AG04449 (cell line): ENCODE measurements at regions of chr1 and their contacts with region 1.

Region 1: GRCh38 chr1:205141236-205142101 is 19.7 kb upstream of the RBBP5 start:
- DNase-seq: peak; percentile 45
- H3K4me3 ChIP-seq: no peak overlapping the region
- CTCF ChIP-seq: peak; percentile 64

Region 2: GRCh38 chr1:204885288-204885711 is 256.2 kb before region 1 on chr1:
- CTCF ChIA-PET with region 1: no interaction called
- POLR2A ChIA-PET with region 1: no interaction called
- DNase-seq: peak; percentile 17
- H3K4me3 ChIP-seq: no peak overlapping the region
- CTCF ChIP-seq: no peak

Region 3: DNA sequence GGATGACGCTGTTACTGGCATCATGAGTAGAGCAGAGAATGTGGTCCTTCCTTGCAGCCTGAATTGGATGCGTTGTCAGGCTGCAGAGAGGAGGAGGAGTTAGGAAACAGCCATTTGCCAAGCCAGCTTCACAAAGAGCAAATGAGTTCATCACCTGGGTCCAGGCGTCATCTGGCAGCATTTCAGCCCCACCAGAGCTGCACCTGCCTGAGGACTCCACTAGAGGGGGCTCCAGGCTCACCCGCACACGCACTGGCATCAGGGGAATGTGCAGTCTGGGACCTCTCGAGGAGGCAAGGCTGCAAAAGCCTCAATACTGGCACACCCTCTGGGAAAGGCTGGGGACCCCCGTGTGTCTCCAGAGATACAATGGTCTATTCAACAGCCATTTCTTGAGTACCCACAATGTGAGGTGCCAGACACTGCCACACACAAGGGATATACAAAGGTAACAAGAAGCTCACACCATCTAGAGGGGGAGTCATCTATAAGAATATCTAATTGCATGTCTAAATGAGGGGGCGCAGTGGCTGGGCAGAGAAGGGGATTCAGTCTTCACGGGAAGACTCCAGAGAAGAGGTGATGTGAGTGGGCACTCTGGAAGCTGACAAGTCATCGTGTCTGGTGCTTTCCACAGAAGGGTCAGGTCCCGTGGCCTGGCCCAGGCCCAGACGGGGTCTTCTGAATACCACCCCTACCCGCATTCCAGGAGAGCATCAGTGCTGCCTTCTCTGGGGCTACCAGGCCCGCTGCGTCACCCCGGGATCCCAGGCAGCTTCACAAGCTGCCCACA is 152.0 kb before region 1 on chr1:
- CTCF ChIA-PET with region 1: interaction called, 63 read pairs
- POLR2A ChIA-PET with region 1: interaction called, 3 read pairs
- DNase-seq: peak; percentile 17
- H3K4me3 ChIP-seq: no peak overlapping the region
- CTCF ChIP-seq: peak; percentile 98

Region 4: DNA sequence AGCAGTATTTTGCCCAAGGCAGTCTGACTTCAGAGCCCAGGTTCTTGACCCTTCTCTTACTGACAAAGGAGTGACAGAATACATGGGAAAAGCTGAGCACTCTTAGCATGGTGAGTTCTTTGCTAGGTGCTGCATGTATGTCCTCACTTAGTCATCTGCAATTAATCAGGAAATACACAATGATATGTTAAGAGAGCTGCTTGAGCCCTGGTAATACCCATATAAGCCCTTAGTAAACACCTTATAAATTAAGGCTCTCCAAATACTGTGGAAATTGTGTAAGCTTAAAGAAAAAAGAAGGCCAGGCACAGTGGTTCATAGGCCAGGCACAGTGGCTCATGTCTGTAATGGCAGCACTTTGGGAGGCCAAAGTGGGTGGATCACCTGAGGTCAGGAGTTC is 43.2 kb before region 1 on chr1:
- CTCF ChIA-PET with region 1: interaction called, 13 read pairs
- POLR2A ChIA-PET with region 1: no interaction called
- DNase-seq: no peak
- H3K4me3 ChIP-seq: no peak overlapping the region
- CTCF ChIP-seq: no peak

Region 5: DNA sequence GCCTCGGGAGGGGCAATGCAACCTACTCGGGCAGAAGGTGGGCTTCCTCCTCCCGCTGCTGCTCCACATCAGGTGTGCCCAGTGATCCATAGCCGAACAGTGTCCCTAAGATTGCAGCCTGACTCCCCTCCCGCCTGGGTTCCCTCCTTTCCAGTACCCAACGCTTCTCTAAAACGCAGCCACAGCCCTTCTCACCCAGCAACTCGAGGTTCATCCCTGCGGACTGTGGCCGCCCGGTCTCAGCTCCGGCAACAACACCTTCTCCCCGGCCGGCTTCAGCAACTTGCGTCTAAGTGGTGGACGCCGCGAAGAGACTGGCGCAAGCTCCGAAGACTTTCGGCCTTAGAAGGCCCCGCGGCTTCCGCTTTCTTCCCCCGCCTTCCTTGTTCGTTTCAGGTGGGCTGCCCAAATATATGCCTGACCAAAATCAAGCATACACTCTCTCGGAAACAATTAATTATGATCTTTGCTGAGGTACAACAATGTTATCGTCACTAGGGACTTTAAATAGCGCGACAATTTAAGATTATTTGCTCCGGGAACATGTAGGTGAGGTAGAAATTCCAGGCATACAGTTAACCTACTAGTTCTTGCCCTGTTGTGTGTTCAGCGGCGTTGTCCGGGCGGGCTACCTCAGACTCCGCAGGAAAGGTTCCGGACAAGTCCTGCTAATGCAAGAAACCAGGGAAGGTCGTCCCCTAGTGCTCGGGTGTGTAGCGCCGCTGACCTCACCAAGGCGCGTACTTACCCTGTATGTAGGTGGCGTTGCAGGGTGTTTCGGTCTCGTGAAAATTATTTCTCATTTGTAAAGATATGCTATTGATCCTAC is 19.6 kb before region 1 on chr1 and contains the start of gene RBBP5:
- CTCF ChIA-PET with region 1: interaction called, 239 read pairs
- POLR2A ChIA-PET with region 1: interaction called, 6 read pairs
- DNase-seq: peak; percentile 94
- H3K4me3 ChIP-seq: peak within 1 kb of the TSS; percentile 99
- CTCF ChIP-seq: peak; percentile 88

Region 6: DNA sequence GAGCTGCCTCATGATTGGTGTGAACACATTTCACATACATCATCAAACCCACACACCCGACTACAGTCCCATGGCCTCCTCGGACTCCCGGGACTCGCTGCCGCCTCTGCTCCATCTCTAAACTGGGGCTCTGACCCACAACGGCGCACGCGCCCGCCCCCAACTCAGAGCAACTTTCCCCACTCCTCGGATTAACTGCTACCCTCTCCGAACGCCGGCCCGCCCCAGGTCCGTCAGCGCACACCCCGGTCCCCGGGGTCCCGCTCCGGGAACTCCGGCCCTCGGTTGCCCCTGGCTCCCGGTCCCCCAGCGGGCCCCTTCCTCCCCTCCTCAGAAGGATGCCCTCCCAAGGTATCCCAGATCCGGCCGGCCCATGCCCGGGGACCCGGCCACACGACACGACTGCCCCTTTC is 69.3 kb after region 1 on chr1:
- CTCF ChIA-PET with region 1: interaction called, 10 read pairs
- POLR2A ChIA-PET with region 1: no interaction called
- DNase-seq: no peak
- H3K4me3 ChIP-seq: peak overlapping the region; percentile 85
- CTCF ChIP-seq: no peak

Region 7: DNA sequence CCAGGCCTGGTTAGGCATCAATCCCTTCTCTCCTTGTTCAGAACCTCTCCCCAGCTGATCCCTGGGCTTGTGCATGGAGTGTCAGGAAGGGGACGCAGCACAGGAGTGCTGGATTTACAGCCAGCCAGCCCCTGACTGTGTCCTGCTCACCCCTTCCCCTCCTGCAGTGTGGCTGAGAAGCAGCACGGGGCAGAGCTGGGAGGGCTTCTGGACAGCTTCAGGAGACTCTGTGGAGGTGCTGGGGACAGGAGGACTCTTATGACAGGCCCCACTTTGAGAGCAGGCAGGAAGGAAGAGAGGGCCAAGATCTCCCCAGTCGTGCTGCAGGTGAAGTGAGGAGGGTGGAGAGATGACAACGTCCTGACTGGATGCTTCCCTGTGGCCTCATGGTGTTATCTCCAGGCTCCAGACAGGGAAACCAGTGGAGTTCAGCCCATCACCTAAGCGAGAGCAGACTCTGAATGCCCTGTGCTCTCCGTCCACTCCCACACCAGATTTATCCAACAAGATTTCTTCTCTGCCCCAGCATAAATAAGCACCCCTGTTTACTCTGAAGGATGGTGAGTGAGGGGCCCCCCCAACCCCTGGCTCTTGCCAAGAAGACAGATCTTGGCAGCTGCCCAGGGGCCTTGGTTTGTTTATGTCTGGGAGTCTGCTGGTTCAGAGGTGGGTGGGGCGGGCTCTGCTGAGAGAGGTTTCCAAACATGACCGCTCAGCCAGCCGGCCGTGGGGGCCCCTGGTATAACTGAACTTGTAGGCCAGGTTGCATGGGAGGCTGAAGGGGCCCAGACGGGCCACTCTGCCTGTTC is 107.5 kb after region 1 on chr1:
- CTCF ChIA-PET with region 1: interaction called, 156 read pairs
- POLR2A ChIA-PET with region 1: no interaction called
- DNase-seq: no peak
- H3K4me3 ChIP-seq: no peak overlapping the region
- CTCF ChIP-seq: no peak